ENCODE measurements at regions of chr20 and their contacts with region 1.

Region 1: GRCh38 chr20:41339507-41340326 is 904 bp upstream of the LPIN3 start:
- DNase-seq: peak; percentile 81
- ATAC-seq: peak; percentile 85
- H3K4me3 ChIP-seq: peak overlapping the region; percentile 68 to 91 (median 76)
- H3K27ac ChIP-seq: no peak overlapping the region
- H3K4me1 ChIP-seq: peaks cover 40% of the 10 kb centered on the region
- H3K27me3 ChIP-seq: peaks cover 5 to 20% of the 10 kb centered on the region in 2 experiments
- CTCF ChIP-seq: peak; percentile 100
- EP300 ChIP-seq: no peak
- POLR2A ChIP-seq: no peak
- RAD21 ChIP-seq: peak; percentile 100

Region 2: GRCh38 chr20:40970201-40970600 is 369.5 kb before region 1 on chr20:
- CTCF ChIA-PET with region 1: interaction called, 4 read pairs
- POLR2A ChIA-PET with region 1: no interaction called
- in situ Hi-C with region 1: loop called (anchors 5 kb)
- intact Hi-C with region 1: loop called (anchors 1 kb)
- DNase-seq: no peak
- ATAC-seq: no peak
- H3K4me3 ChIP-seq: no peak overlapping the region
- H3K27ac ChIP-seq: no peak overlapping the region
- H3K4me1 ChIP-seq: peaks cover 25% of the 10 kb centered on the region
- H3K27me3 ChIP-seq: peaks cover 4 to 8% of the 10 kb centered on the region in 2 experiments; a peak in 2 of 5 replicates
- CTCF ChIP-seq: 0 out of 2 replicates have a peak, but pooled peaks have one; percentile 21
- EP300 ChIP-seq: no peak
- POLR2A ChIP-seq: no peak
- RAD21 ChIP-seq: no peak

Region 3: GRCh38 chr20:41173161-41173721 is 166.5 kb before region 1 on chr20:
- CTCF ChIA-PET with region 1: interaction called, 76 read pairs
- POLR2A ChIA-PET with region 1: interaction called, 12 read pairs
- in situ Hi-C with region 1: loop called (anchors 5 kb)
- intact Hi-C with region 1: loop called (anchors 1 kb)
- DNase-seq: peak; percentile 62
- ATAC-seq: peak; percentile 89
- H3K4me3 ChIP-seq: no peak overlapping the region
- H3K27ac ChIP-seq: no peak overlapping the region
- H3K4me1 ChIP-seq: no peaks in the 10 kb centered on the region
- H3K27me3 ChIP-seq: no peaks in the 10 kb centered on the region
- CTCF ChIP-seq: peak; percentile 98
- EP300 ChIP-seq: no peak
- POLR2A ChIP-seq: no peak
- RAD21 ChIP-seq: peak; percentile 98

Region 4: DNA sequence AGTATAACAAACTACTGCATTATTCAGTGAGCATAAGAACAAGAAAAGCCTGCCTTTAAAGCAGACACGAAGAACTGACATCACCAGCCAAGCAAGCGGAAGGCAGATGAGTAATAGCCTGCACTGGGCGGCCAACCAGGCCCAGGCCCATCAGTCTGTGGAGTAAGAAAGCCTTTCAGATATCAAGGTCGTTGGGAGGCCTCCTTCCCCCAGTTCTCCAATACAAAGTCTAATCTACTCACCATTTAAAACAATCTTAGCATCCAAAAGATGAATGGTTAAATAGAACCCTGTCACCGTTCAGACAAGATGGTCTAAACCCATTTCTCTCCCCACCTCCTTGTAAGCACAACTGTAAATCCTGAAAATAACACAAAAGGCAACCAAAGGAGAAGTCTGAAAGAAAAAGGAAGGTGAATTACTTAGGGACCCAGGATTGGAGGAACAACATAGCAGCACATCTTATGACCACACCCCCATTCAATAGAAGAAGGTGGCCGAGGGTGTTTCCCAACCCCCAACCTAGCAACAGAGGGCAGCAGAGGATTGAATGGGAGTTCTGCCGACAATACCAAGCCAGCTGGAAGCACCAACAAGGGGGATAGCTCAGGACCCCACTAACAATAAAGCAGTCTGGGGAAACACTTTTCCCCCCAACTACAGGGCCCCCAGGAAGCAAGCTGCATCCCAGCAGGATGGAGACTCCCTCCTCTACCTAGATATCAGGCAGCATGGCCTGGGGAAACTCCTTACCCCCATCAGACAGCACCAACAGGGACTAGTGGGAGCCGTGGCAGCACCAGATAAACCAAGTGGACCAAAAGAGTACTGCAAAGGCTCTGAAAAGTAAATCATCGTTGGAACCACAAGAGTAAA is 90.1 kb before region 1 on chr20:
- CTCF ChIA-PET with region 1: interaction called, 26 read pairs
- POLR2A ChIA-PET with region 1: no interaction called
- in situ Hi-C with region 1: loop called (anchors 10 kb)
- intact Hi-C with region 1: loop called (anchors 1 kb)
- DNase-seq: peak; percentile 55
- ATAC-seq: peak; percentile 96
- H3K4me3 ChIP-seq: no peak overlapping the region
- H3K27ac ChIP-seq: no peak overlapping the region
- H3K4me1 ChIP-seq: no peaks in the 10 kb centered on the region
- H3K27me3 ChIP-seq: no peaks in the 10 kb centered on the region
- CTCF ChIP-seq: peak; percentile 83
- EP300 ChIP-seq: no peak
- POLR2A ChIP-seq: no peak
- RAD21 ChIP-seq: peak; percentile 73

Region 5: DNA sequence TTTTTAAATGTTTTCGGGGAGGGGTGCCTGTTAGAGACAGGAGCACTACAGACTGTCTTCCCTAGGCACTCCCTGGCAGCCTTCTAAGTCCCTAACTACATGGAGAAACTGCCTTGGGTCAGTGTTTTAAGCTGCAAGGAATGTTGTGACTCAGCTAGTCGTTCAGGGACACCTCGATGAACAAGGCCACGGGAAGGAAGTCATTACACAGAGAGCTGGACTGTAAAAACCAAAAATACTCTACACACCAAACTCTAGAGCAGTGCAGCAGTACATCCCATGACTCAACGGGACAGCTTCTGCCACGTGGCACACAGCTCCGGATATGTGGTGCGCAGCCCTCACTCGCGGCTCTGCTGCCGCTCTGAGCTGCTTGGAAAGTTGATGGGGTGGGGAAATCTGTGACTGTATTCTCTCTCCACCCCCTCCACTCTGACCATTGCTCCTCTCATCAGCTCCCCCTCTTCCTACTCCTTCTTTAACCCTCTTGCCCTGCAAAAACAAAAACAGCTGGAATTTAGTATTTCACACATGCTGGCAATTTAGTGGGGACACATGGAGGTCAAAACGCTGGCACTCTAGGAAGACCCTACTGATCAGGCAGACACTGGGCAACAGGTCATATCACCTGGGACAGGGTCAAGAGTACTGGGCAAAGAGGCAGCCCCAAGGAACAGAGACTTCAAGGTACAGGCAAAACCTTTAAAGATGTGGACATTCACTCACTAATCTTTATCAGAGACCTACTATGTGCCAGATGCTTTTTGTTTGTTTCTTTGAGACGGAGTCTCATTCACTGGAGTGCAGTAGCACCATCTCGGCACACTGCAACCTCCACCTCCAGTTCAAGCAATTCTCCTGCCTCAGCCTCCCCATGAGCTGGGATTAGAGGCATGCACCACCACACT is 10.0 kb before region 1 on chr20:
- CTCF ChIA-PET with region 1: no interaction called
- POLR2A ChIA-PET with region 1: interaction called, 12 read pairs
- in situ Hi-C with region 1: no loop called
- intact Hi-C with region 1: no loop called
- DNase-seq: peak; percentile 82
- ATAC-seq: peak; percentile 86
- H3K4me3 ChIP-seq: peak overlapping the region in 2 of 3 experiments; percentile 4 to 49; a peak in 3 of 6 replicates
- H3K27ac ChIP-seq: no peak overlapping the region
- H3K4me1 ChIP-seq: peaks cover 19% of the 10 kb centered on the region
- H3K27me3 ChIP-seq: peaks cover 2 to 29% of the 10 kb centered on the region in 2 experiments; a peak in 4 of 5 replicates
- CTCF ChIP-seq: 0 out of 2 replicates have a peak, but pooled peaks have one; percentile 8
- EP300 ChIP-seq: no peak
- POLR2A ChIP-seq: peak; percentile 48 to 60; a peak in 3 of 4 replicates
- RAD21 ChIP-seq: no peak

Region 6: GRCh38 chr20:41411391-41411847 is 71.7 kb after region 1 on chr20:
- CTCF ChIA-PET with region 1: no interaction called
- POLR2A ChIA-PET with region 1: no interaction called
- in situ Hi-C with region 1: no loop called
- intact Hi-C with region 1: loop called (anchors 1 kb)
- DNase-seq: no peak
- ATAC-seq: no peak
- H3K4me3 ChIP-seq: no peak overlapping the region
- H3K27ac ChIP-seq: no peak overlapping the region
- H3K4me1 ChIP-seq: no peaks in the 10 kb centered on the region
- H3K27me3 ChIP-seq: no peaks in the 10 kb centered on the region
- CTCF ChIP-seq: peak; percentile 42
- EP300 ChIP-seq: no peak
- POLR2A ChIP-seq: no peak
- RAD21 ChIP-seq: peak; percentile 17; the same call in 1 of the 2 replicates

Region 7: DNA sequence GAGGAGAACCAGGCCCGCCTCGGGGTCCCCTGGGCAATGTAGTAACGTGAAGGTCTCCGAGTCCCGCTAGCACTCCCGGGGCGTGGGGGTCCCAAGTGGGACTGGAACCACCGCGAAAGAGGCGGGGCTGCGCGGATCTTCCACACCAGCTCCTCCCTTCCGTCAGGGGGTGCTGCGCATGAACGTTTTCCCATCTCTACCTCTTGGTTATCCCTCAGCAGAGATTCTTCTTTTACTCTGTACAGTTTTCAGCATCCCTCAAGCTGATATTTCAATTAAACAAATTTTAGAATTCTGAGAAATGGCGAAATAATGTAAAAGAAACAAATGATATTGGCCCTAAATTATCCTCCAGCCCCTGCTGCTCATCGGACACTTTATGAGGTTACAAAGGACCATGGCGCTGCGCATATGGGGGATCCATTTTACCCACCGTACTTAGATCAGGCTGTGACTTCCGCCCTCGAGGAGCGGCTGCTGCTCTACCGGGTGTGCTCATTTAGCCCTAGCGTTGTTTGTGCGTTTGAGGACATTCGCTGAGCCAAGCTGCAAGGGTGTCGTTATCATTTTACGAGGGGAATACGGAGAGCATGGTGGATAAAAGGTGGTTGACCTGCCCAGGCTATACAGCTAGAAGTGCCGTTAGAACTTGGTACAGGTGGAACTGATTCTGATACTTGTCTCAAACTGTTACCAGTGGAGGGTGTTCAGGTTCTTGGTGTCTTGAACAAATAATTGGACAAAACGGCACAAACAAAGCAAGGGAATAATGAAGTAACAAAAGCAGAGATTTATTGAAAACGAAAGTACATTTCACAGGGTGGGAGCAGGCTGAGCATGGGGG is 353.6 kb after region 1 on chr20:
- CTCF ChIA-PET with region 1: no interaction called
- POLR2A ChIA-PET with region 1: no interaction called
- in situ Hi-C with region 1: no loop called
- intact Hi-C with region 1: loop called (anchors 5 kb)
- DNase-seq: peak; percentile 95
- ATAC-seq: peak; percentile 96
- H3K4me3 ChIP-seq: peak overlapping the region; percentile 67 to 85 (median 73)
- H3K27ac ChIP-seq: peak overlapping the region; percentile 80
- H3K4me1 ChIP-seq: peaks cover 16% of the 10 kb centered on the region
- H3K27me3 ChIP-seq: peaks cover 0 to 9% of the 10 kb centered on the region in 2 experiments; a peak in 2 of 5 replicates
- CTCF ChIP-seq: peak; percentile 72
- EP300 ChIP-seq: no peak
- POLR2A ChIP-seq: peak; percentile 86 to 91
- RAD21 ChIP-seq: peak; percentile 63